Prostate gland (tissue), 2 donors: ENCODE measurements at regions of chr22 and their contacts with region 1.

Region 1: DNA sequence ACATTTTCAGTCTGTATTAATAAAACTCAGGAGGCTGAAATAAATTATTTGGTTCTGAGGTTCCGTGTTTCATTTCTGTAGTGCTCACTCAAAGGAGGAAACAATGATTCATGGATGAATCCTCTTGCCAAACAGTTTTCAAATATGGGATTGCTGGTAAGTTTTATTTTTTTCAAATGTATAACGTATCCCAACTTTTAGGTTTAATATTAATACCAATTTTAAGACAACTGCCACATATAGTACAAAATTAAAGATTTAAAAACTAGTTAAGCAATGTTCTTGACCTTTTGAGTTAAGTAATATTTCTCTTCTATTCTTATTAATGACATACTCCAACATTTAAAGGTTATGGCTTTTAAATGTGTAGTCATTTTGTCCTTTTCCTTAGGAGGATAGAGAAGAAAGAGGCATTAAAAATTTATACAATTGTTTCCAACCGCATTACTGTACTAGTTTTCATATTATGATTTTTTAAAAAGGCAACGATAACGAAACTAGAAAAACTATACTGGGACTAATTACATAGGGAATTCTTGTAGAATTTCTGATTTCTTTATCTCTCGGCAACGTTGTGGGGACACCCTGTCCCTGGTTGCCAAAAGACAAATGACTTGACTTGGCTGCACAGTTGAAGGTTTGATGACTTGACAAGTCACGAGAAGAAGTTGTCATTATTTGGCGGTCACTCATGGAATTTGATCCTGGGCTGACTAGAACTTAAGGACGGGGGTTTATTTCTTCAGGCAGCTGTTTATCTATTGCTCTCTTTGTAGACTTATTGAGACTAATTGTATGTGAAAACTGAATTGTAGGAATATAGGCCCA is 69.1 kb upstream of the ADSL start:
- DNase-seq: no peak
- H3K4me3 ChIP-seq: peak overlapping the region; percentile 18 to 24
- H3K27ac ChIP-seq: peak overlapping the region; percentile 84 to 87
- H3K4me1 ChIP-seq: peaks cover 4% of the 10 kb centered on the region
- H3K27me3 ChIP-seq: no peaks in the 10 kb centered on the region
- CTCF ChIP-seq: no peak
- POLR2A ChIP-seq: no peak

Region 2: DNA sequence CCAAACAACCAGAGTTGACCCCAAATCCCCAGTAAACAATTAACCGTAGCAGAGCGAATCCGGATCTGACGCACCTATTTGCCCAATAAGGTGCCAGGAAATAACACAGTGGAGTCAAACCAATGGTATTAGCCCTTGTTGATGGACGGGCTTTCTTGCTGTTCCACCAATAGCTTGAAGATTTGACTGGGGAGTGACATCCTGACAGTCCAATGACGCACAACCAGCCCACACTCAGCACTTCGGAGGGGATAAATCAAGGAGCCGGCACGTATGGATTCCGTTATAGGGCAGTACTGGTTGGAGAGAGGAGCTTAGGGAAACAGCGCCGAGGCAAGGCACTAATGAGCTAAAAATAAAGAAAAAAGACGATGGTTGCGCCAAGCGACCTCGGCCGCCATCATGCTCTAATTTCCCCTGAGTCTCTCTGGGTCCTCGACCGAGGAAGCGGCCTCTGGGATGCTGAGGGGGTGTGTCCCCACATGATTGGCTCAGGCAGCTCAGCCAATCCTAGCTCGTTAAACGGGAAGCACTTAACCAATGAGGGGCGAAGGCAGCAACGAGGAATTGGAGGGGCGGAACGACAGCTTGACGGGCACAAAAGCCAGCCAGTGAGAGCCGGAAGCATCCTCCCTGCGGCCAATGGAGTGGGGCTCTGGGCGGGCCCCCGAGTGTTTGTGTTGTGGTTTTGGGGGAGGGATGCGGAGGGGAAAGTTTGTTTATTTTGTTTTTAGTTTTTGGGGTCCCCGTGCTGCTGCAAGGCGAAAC is 232.9 kb before region 1 on chr22:
- intact Hi-C with region 1: loop called (anchors 10 kb)
- DNase-seq: peak; percentile 99
- H3K4me3 ChIP-seq: peak overlapping the region; percentile 61 to 81
- H3K27ac ChIP-seq: peak overlapping the region; percentile 91 to 92
- H3K4me1 ChIP-seq: peaks cover 15% of the 10 kb centered on the region
- H3K27me3 ChIP-seq: no peaks in the 10 kb centered on the region
- CTCF ChIP-seq: peak in 1 of 4 experiments; percentile 15
- POLR2A ChIP-seq: peak; percentile 51